Mammary epithelial cell (primary cell): ENCODE measurements at regions of chr1 and their contacts with region 1.

Region 1: GRCh38 chr1:113978863-113979702 is at the start of gene OLFML3:
- DNase-seq: peak; percentile 75
- H3K4me3 ChIP-seq: no peak within 1 kb of the TSS
- H3K27ac ChIP-seq: no peak within 1 kb of the TSS
- H3K4me1 ChIP-seq: peaks cover 18% of the 10 kb centered on the region
- H3K27me3 ChIP-seq: no peaks in the 10 kb centered on the region
- CTCF ChIP-seq: peak; percentile 65 to 74
- total RNA-seq, gene OLFML3: 0.66 to 0.83 TPM

Region 2: GRCh38 chr1:113928941-113929749 is 49.9 kb before region 1 on chr1 and contains the start of gene HIPK1:
- CTCF ChIA-PET with region 1: no interaction called
- dilution Hi-C with region 1: loop called (anchors 5 kb)
- in situ Hi-C with region 1: no loop called
- intact Hi-C with region 1: no loop called
- DNase-seq: peak; percentile 86
- H3K4me3 ChIP-seq: peak within 1 kb of the TSS; percentile 47 to 95 (median 86)
- H3K27ac ChIP-seq: peak within 1 kb of the TSS; percentile 89
- H3K4me1 ChIP-seq: peaks cover 23% of the 10 kb centered on the region
- H3K27me3 ChIP-seq: no peaks in the 10 kb centered on the region
- CTCF ChIP-seq: no peak
- total RNA-seq, gene HIPK1: 29.3 to 38.4 TPM

Region 3: DNA sequence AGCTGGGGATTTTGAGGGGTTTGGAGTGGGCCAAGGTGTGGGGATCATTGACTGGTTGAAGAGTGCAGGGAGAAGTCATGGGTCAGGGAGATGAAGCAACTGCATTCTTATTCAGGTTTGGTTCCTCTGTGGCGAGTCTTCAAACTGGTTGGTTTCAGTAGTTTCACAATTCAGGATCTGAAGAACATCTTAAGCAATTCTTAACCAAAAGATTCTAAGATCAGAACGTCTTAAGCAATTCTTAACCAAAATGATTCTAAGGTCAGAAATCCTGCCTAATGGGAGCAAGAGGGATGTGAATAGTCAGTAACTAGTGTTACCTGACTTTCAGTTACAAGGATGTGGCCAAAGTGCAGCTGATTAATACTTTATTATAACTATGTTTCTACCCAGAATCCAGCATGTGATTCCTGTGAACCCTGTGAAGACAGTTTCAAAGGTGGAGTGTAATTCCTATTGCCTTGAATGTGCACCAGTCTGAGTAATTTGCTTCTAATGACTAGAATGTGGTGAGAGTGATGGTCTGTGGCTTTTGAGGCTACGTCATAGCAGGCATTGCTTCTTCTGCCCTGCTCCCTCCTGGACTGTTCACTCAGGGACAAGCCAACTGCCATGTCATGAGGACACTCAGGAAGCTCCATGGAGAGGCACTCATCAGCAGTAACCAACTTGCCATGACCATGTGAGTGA is 61.4 kb after region 1 on chr1:
- CTCF ChIA-PET with region 1: no interaction called
- dilution Hi-C with region 1: no loop called
- in situ Hi-C with region 1: no loop called
- intact Hi-C with region 1: no loop called
- DNase-seq: peak; percentile 57
- H3K4me3 ChIP-seq: no peak overlapping the region
- H3K27ac ChIP-seq: no peak overlapping the region
- H3K4me1 ChIP-seq: peaks cover 11% of the 10 kb centered on the region
- H3K27me3 ChIP-seq: peaks cover 4% of the 10 kb centered on the region
- CTCF ChIP-seq: no peak

Region 4: GRCh38 chr1:114093624-114094376 is 114.7 kb after region 1 on chr1:
- CTCF ChIA-PET with region 1: no interaction called
- dilution Hi-C with region 1: no loop called
- in situ Hi-C with region 1: no loop called
- intact Hi-C with region 1: loop called (anchors 5 kb)
- DNase-seq: peak; percentile 86
- H3K4me3 ChIP-seq: no peak overlapping the region
- H3K27ac ChIP-seq: peak overlapping the region; percentile 36
- H3K4me1 ChIP-seq: peaks cover 34% of the 10 kb centered on the region
- H3K27me3 ChIP-seq: no peaks in the 10 kb centered on the region
- CTCF ChIP-seq: peak; percentile 38 to 70

Region 5: DNA sequence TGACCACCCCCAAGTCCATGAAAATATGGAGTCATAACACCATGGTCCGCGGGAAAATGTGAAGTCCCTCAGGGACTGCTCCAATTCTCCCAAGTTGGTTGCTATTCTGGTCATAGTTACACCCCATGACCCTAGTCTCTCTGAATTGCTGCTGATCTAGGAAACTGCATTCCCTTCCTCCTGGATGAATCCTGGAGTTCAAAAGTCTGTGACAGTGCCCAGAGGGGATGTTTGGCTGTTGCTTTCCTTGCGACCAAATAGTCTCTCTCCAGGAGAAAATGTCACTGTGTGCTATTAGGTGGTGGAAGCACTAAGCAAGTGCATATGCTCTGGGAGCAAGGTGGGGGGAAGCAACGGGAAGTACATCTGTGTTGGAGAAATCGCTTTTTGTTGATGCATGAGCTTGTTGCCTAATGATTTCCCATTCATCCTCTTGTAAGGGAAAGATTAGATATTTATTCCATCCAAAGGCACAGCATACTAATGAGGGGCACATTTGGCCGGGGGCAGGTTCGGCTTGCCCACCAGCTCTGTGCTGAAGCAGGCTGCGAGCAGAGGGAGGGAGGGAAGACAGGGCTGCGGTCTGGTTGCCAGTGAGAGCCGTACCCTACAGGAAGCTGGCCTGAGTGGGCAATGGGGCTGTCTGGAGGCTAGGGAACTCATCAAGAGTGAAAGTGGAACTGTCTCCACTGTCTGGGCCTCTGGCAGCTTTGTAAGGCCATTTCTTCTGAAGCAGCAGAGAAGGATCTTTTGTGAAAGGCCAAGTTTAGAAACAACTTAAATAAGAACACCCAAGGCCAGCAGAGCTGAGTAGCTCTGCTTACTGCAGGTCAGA is 147.4 kb after region 1 on chr1:
- CTCF ChIA-PET with region 1: no interaction called
- dilution Hi-C with region 1: no loop called
- in situ Hi-C with region 1: no loop called
- intact Hi-C with region 1: no loop called
- DNase-seq: no peak
- H3K4me3 ChIP-seq: no peak overlapping the region
- H3K27ac ChIP-seq: no peak overlapping the region
- H3K4me1 ChIP-seq: peaks cover 16% of the 10 kb centered on the region
- H3K27me3 ChIP-seq: no peaks in the 10 kb centered on the region
- CTCF ChIP-seq: no peak

Region 6: GRCh38 chr1:114274621-114275317 is 295.7 kb after region 1 on chr1:
- CTCF ChIA-PET with region 1: no interaction called
- dilution Hi-C with region 1: no loop called
- in situ Hi-C with region 1: loop called in 1 of 2 experiments (anchors 10 kb)
- intact Hi-C with region 1: no loop called
- DNase-seq: no peak
- H3K4me3 ChIP-seq: no peak overlapping the region
- H3K27ac ChIP-seq: no peak overlapping the region
- H3K4me1 ChIP-seq: no peaks in the 10 kb centered on the region
- H3K27me3 ChIP-seq: peaks cover 2% of the 10 kb centered on the region
- CTCF ChIP-seq: no peak

Region 7: DNA sequence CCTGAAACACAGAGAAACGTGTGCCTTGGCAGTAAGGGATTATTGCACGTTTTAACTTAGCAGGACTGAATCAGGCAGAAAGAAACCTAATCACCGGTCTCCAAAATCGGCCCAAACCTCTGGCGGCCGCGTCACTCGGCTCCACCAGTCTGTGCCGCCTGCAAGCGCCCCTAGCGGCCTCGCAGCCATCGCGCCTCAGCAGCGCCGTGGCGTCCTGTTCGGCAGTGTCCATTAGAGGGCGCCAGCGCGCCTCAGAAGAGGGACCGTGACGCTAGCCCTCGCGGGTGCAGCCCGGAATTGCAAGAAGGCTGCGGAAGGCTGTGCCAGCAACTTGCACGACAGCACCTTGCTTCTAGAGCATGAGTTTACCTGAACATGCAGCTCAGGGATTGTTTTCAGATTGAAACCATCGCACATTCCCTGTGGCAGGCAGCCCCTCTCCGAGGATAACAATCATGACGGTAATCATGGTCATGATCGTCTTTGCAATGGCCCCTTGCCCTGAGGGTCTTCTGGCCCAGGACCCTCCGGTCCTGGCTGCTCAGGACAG is 367.5 kb after region 1 on chr1:
- CTCF ChIA-PET with region 1: interaction called, 3 read pairs
- dilution Hi-C with region 1: no loop called
- in situ Hi-C with region 1: no loop called
- intact Hi-C with region 1: loop called (anchors 1 kb)
- DNase-seq: peak; percentile 92
- H3K4me3 ChIP-seq: peak overlapping the region; percentile 48 to 51 (median 49)
- H3K27ac ChIP-seq: peak overlapping the region; percentile 33
- H3K4me1 ChIP-seq: peaks cover 6% of the 10 kb centered on the region
- H3K27me3 ChIP-seq: no peaks in the 10 kb centered on the region
- CTCF ChIP-seq: peak; percentile 100

Region 8: GRCh38 chr1:114695430-114696058 is 716.5 kb after region 1 on chr1 and contains the start of gene AMPD1:
- CTCF ChIA-PET with region 1: no interaction called
- dilution Hi-C with region 1: no loop called
- in situ Hi-C with region 1: loop called in 1 of 2 experiments (anchors 25 kb)
- intact Hi-C with region 1: no loop called
- DNase-seq: peak; percentile 52
- H3K4me3 ChIP-seq: no peak within 1 kb of the TSS
- H3K27ac ChIP-seq: no peak within 1 kb of the TSS
- H3K4me1 ChIP-seq: no peaks in the 10 kb centered on the region
- H3K27me3 ChIP-seq: no peaks in the 10 kb centered on the region
- CTCF ChIP-seq: no peak
- total RNA-seq, gene AMPD1: not detected